Activated T-helper 1 cell treated with anti-CD3 and anti-CD28 coated beads, Interleukin-12 subunit alpha, Interleukin-12 subunit beta, Interleukin-2, Interleukin-4 antibody, amounts not matched to agents 30 ng/mL and 10 ng/mL and 1 ng/mL, durations not matched to agents 14 hours and 24 hours and 36 hours (primary cell): ENCODE measurements at regions of chr4 and their contacts with region 1.

Region 1: DNA sequence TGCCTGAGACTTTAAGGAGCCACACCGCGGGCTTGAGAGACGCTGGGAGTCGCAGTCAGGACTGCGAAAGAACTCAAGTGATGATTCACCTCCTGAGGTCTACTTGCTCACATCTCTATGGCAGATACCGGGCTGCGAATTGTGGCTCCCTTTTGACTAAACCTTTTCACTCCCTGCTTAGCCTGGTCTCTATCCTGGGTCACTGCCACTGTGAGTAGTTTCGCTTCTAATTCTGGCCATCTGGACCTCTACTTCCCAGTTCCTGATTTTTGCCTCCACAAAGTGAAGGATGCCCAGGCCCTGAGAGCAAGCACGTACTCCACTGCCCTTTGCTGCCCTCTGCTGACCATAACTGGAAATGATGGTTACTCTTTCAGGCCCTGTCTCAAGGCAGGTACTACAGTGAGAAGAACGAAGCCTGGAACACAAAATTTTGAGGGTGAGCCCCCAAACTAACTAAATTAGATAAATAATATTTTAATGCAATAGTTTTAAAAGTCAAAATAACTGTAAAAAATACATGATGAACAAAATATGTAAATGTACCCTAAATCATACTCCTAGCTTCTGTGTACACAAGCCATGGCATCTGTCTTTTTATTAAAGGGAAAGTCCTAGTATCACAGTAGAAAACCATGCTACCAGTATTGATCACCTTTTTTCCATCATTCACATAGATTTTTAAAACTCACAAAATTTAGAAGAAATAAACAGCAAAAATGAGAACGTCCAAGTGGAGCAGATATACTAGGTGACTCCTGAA is 16.7 kb downstream of the MAD2L1 start:
- DNase-seq: peak; percentile 53
- H3K4me3 Mint-ChIP-seq: no peak overlapping the region
- H3K27ac Mint-ChIP-seq: no peak overlapping the region
- H3K4me1 Mint-ChIP-seq: peaks cover 5% of the 10 kb centered on the region
- H3K27me3 Mint-ChIP-seq: no peaks in the 10 kb centered on the region

Region 2: GRCh38 chr4:119314356-119314755 is 735.6 kb before region 1 on chr4:
- intact Hi-C with region 1: loop called (anchors 1 kb)
- DNase-seq: peak; percentile 10
- H3K4me3 Mint-ChIP-seq: no peak overlapping the region
- H3K27ac Mint-ChIP-seq: no peak overlapping the region
- H3K4me1 Mint-ChIP-seq: no peaks in the 10 kb centered on the region
- H3K27me3 Mint-ChIP-seq: peaks cover 12% of the 10 kb centered on the region

Region 3: GRCh38 chr4:119559044-119559647 is 490.8 kb before region 1 on chr4:
- intact Hi-C with region 1: loop called (anchors 2 kb)
- DNase-seq: no peak
- H3K4me3 Mint-ChIP-seq: no peak overlapping the region
- H3K27ac Mint-ChIP-seq: no peak overlapping the region
- H3K4me1 Mint-ChIP-seq: no peaks in the 10 kb centered on the region
- H3K27me3 Mint-ChIP-seq: no peaks in the 10 kb centered on the region

Region 4: DNA sequence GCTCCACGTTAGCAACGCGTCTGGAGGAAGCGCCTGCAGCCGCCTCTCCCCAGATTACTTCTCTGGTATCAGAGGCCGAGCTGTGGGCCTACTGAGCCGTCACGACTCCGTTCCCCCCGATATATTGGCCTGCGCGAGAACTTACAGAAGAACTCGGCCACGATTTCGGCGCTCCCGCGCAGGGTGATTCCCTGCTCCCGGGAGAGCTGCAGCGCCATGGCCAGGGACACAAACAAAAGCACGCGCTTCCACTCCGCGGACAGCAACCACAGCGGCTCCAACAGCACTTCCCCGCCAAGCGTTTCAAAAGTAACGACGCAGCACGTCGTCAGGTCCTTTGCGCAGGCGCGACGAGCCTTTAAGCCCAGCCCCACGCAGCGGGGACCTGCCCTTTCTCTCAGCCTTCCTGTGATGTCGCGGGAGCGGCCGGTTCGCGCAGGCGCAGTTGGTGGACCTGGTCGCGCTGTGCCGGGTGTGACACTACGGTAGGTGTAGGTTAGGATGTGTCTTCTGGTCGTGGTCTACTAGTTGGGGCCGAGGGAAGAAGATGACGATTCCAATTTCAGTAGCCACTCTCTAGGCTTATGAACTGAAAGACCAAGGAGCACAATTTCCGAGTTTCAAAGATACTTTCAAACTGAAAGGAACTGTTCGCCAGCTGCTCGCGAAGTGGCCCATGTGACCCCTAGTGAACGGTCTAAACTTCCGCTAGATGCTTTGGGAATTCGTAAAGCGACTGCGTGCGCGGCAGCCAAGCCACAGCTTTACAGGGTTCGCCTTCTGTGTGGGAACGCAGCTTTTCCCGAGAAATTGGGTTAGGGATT is 16.8 kb after region 1 on chr4 and contains the start of gene MAD2L1:
- intact Hi-C with region 1: loop called (anchors 1 kb)
- DNase-seq: peak; percentile 98
- H3K4me3 Mint-ChIP-seq: peak within 1 kb of the TSS; percentile 99
- H3K27ac Mint-ChIP-seq: peak within 1 kb of the TSS; percentile 100
- H3K4me1 Mint-ChIP-seq: peaks cover 83% of the 10 kb centered on the region
- H3K27me3 Mint-ChIP-seq: peaks cover 4% of the 10 kb centered on the region
- total RNA-seq, gene MAD2L1: 63.3 and 69.0 TPM in 2 replicates

Region 5: DNA sequence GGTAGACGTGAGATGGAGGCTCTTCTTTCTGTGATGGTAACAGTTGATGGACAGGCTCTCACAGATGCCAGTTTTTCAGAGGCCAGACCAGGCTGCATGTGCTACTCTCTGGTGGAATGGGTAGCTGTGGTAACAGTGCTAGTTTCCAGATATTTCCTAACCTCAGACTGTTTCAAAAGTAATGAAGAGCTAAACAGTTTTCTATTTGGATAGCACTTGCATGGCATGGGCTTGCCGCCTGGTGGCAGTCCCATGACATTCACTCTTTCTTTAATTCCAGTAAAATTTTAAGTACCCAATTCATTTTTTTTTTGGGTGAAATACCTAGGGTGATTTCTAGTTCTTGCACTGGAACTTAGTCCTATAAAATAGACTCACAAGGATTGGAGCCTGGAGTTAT is 236.9 kb after region 1 on chr4:
- intact Hi-C with region 1: no loop called
- DNase-seq: no peak
- H3K4me3 Mint-ChIP-seq: no peak overlapping the region
- H3K27ac Mint-ChIP-seq: no peak overlapping the region
- H3K4me1 Mint-ChIP-seq: no peaks in the 10 kb centered on the region
- H3K27me3 Mint-ChIP-seq: no peaks in the 10 kb centered on the region

Region 6: DNA sequence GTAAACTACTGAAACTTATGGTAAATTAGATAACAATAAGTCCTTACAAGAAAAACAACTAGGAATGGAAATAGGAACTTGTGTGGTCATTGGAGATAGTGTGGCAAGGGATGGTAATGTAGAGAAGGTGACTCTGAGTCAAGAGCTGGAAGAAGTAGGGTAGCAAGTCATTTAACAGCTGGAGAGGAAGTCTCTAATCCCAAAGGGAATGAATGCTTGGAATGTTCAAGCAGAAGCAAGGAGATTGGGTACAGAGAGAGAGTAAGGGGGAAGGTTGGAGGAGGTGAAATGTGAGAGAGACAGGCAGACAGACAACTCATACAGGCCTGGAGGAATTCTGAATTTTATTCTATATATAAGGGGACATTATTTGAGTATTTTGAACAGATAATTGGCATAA is 277.4 kb after region 1 on chr4:
- intact Hi-C with region 1: no loop called
- DNase-seq: no peak
- H3K4me3 Mint-ChIP-seq: no peak overlapping the region
- H3K27ac Mint-ChIP-seq: no peak overlapping the region
- H3K4me1 Mint-ChIP-seq: no peaks in the 10 kb centered on the region
- H3K27me3 Mint-ChIP-seq: no peaks in the 10 kb centered on the region